K562 (cell line): ENCODE measurements at regions of chr3 and their contacts with region 1.

Region 1: DNA sequence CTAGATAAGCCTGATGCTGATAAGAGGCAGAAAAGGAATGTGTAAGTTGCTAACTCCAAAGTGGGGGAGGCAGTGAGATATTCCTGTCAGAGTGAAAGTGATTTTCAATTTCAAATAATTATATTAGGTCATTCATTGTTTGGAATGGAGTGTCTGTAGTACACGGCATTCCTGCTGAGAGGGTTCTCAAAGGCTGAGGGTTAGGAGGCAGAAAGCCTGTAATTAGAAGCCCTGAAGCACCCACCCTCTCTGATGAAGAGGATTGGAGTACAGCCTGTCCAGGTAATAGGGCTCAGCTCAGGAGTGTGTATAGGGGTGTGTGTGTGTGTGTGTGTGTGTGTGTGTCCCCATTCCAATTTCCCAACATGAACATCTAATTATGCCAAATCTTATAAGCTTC is 486.8 kb downstream of the MAGI1 start:
- DNase-seq: no peak
- ATAC-seq: no peak
- H3K4me3 ChIP-seq: no peak overlapping the region
- H3K27ac ChIP-seq: no peak overlapping the region
- H3K4me1 ChIP-seq: peaks cover 0 to 8% of the 10 kb centered on the region in 2 experiments; a peak in 3 of 5 replicates
- H3K27me3 ChIP-seq: no peaks in the 10 kb centered on the region
- CTCF ChIP-seq: no peak
- EP300 ChIP-seq: no peak
- POLR2A ChIP-seq: no peak
- RAD21 ChIP-seq: no peak

Region 2: DNA sequence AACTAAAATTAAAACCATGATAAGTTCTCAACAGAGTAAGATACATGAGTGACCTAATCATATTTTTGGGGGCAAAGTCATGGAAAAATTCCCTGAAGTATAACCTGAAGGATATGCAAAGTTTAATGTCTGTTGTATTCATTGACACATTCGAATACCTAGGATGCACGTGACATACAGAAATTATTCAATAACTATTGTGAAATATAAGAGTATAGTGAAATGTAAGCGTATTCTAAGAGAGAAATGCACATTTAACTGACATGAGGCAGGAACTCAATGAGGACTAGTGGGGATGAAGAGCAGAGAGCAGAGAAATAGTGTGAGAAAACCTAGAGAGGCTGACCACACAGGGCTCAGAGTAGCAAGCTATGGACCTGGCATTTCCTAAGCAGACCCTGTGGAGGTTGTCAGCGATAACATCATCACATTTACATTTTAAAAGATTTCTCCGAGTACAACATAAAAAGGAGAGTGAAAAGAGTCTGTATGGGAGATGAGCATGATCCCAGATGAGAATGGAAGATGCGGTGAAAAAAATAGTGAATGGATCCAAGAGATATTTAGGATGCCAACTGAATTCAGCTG is 102.0 kb before region 1 on chr3:
- CTCF ChIA-PET with region 1: no interaction called
- POLR2A ChIA-PET with region 1: no interaction called
- in situ Hi-C with region 1: no loop called
- intact Hi-C with region 1: loop called (anchors 10 kb)
- DNase-seq: no peak
- ATAC-seq: no peak
- H3K4me3 ChIP-seq: no peak overlapping the region
- H3K27ac ChIP-seq: no peak overlapping the region
- H3K4me1 ChIP-seq: no peaks in the 10 kb centered on the region
- H3K27me3 ChIP-seq: no peaks in the 10 kb centered on the region
- CTCF ChIP-seq: no peak
- EP300 ChIP-seq: no peak
- POLR2A ChIP-seq: no peak
- RAD21 ChIP-seq: no peak